BJ (cell line): ENCODE measurements at regions of chr20 and their contacts with region 1.

Region 1: DNA sequence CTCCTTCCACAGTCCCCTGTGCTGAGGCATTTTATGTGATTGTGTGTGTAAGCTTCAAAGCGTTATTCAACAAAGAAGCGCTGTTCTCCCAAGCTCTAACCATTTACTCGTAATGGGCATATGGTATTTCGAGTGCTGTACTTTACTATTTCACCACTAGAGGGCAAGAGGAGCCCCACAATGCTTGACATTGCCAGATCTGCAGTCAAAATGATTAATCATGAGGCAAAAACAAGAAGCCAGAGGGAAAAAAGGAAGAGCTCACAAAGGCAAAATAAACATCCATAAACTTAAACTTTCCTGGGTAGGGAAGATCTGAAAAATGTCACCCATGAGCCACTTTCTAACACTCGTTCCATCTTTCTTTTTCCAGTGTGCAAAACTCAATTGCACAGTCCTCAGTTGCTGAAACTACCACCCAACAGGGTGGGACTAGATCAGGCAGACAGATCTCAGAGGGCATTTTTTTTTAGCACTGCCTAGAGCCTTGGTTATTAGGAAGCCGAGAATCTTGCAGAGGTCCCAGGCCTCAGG is 215.0 kb upstream of the PLCB4 start:
- DNase-seq: no peak
- H3K4me3 ChIP-seq: no peak overlapping the region
- H3K27me3 ChIP-seq: no peaks in the 10 kb centered on the region
- CTCF ChIP-seq: peak; percentile 82

Region 2: DNA sequence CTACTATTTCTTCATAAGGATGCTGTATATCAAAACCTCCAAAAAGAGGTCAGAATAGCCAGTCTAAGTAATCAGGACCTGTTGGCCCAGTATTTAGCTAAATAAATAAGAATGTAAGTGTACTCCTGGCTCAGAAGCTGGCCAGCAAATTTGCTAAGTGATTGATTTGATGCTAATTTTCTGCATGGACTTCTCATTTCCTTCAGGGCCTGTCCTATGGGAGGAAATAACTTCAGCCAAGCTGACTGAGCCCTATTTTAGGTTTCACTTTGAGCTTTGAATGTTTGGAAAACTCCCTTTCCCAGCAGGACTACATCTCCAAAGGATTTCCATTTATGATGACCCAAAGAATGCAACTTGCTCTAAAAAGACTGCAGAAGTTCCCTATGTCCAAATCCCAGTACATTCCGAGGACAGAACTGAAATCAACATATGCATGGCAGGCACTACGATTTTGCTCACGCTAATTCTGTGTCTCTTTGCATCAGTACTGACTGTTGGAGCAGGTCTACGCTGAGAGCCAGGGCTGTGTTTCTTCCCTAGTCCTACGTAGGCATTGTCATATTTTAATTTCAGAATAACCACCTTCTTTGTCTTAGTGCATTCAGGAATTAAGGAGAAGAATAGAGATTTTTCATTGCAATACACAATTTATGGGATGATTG is 226.4 kb before region 1 on chr20:
- CTCF ChIA-PET with region 1: no interaction called
- POLR2A ChIA-PET with region 1: no interaction called
- DNase-seq: no peak
- H3K4me3 ChIP-seq: no peak overlapping the region
- H3K27me3 ChIP-seq: no peaks in the 10 kb centered on the region
- CTCF ChIP-seq: no peak

Region 3: DNA sequence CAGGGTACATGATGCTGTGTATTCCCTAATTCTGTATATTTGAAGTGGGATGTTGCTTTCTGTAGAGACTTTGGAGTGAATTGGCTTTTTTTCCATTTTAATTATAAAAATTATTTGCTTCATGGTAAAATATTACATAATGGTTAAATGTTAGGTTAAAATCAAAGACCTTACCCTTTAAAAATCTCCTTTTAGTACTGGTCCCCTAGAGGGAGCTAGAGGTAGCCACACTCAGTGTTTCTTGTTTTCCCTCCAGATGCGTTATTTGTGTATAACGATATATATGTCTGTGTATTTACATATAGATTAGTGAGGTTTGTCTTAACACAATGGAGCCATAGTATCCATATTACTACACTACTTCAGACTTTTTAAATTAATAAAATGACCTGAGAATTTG is 361.7 kb after region 1 on chr20:
- CTCF ChIA-PET with region 1: interaction called, 11 read pairs
- POLR2A ChIA-PET with region 1: no interaction called
- DNase-seq: no peak
- H3K4me3 ChIP-seq: no peak overlapping the region
- H3K27me3 ChIP-seq: no peaks in the 10 kb centered on the region
- CTCF ChIP-seq: peak; percentile 37

Region 4: DNA sequence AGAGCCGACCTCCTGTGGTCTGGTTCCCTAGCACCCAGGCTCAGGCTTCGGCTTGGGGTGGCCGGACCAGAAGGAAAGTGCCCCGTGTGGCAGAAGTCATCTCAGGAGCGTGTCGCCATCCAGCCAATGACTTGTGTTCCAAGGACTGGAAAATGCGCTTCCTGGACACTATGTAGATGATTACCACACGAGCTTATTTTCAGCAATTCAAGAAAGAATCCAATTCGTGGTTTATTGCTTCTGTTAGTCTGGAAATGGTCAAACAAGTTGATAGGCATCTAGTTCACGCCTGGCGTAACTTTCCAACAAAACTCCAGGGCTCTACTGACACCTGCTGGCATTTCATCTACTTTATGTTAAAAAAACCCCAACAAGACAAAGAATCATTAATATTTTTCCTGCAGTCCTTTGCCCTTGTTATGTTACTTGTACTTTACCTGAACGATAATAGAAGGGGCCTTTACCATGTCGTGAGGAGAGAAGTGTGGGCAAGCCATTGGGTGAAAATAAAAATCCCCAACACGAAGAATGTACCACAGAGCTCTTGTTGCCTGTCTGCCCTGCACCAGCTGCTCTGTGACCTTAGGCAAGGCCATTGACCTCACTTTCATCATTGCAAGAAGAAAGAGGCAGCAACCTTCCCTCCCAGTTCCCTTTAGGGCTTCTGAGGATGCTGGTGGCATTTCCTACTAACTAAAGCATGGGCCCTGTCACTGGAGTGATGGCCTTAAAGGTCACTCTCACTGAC is 505.9 kb after region 1 on chr20:
- CTCF ChIA-PET with region 1: interaction called, 12 read pairs
- POLR2A ChIA-PET with region 1: no interaction called
- DNase-seq: peak; percentile 34
- H3K4me3 ChIP-seq: no peak overlapping the region
- H3K27me3 ChIP-seq: no peaks in the 10 kb centered on the region
- CTCF ChIP-seq: peak; percentile 51